GM12878 (cell line): ENCODE measurements at regions of chr2 and their contacts with region 1.

Region 1: GRCh38 chr2:154527962-154528361 is 170.5 kb upstream of the KCNJ3 start:
- DNase-seq: peak; percentile 15
- ATAC-seq: peak; percentile 61
- H3K4me3 ChIP-seq: no peak overlapping the region
- H3K27ac ChIP-seq: no peak overlapping the region
- H3K4me1 ChIP-seq: no peaks in the 10 kb centered on the region
- H3K27me3 ChIP-seq: no peaks in the 10 kb centered on the region
- CTCF ChIP-seq: no peak
- EP300 ChIP-seq: no peak
- POLR2A ChIP-seq: no peak
- RAD21 ChIP-seq: no peak

Region 2: GRCh38 chr2:154489266-154489858 is 38.6 kb before region 1 on chr2:
- CTCF ChIA-PET with region 1: no interaction called
- POLR2A ChIA-PET with region 1: no interaction called
- RAD21 ChIA-PET with region 1: no interaction called
- SMC1A ChIA-PET with region 1: no interaction called
- in situ Hi-C with region 1: no loop called
- intact Hi-C with region 1: no loop called
- DNase-seq: no peak
- ATAC-seq: peak; percentile 38
- H3K4me3 ChIP-seq: no peak overlapping the region
- H3K27ac ChIP-seq: no peak overlapping the region
- H3K4me1 ChIP-seq: no peaks in the 10 kb centered on the region
- H3K27me3 ChIP-seq: no peaks in the 10 kb centered on the region
- CTCF ChIP-seq: no peak
- EP300 ChIP-seq: no peak
- POLR2A ChIP-seq: no peak
- RAD21 ChIP-seq: no peak

Region 3: DNA sequence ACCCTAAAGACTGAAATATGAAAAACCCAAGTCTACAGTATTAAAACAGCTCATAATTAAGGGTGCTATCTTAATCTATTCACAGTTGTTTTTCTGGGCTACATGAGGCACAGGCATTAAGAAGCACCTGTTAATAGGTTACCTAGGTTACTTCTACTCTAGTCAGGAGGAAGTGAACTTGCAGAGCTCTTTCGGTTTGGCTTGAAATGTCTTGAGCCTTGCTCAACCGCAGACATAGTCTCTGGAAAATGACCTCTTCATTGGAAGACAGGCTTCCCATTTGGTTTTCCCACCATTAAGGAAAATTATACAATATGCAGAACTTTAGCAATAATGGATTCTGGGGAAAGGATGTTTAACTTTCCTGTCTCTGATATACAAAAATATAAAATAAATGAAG is 28.2 kb after region 1 on chr2:
- CTCF ChIA-PET with region 1: interaction called, 3 read pairs
- POLR2A ChIA-PET with region 1: no interaction called
- RAD21 ChIA-PET with region 1: interaction called, 5 read pairs
- SMC1A ChIA-PET with region 1: interaction called, 16 read pairs
- in situ Hi-C with region 1: no loop called
- intact Hi-C with region 1: no loop called
- DNase-seq: no peak
- ATAC-seq: peak; percentile 92
- H3K4me3 ChIP-seq: no peak overlapping the region
- H3K27ac ChIP-seq: no peak overlapping the region
- H3K4me1 ChIP-seq: no peaks in the 10 kb centered on the region
- H3K27me3 ChIP-seq: no peaks in the 10 kb centered on the region
- CTCF ChIP-seq: no peak
- EP300 ChIP-seq: no peak
- POLR2A ChIP-seq: no peak
- RAD21 ChIP-seq: no peak